Psoas muscle (tissue), 8 donors: ENCODE measurements at regions of chr15 and their contacts with region 1.

Region 1: DNA sequence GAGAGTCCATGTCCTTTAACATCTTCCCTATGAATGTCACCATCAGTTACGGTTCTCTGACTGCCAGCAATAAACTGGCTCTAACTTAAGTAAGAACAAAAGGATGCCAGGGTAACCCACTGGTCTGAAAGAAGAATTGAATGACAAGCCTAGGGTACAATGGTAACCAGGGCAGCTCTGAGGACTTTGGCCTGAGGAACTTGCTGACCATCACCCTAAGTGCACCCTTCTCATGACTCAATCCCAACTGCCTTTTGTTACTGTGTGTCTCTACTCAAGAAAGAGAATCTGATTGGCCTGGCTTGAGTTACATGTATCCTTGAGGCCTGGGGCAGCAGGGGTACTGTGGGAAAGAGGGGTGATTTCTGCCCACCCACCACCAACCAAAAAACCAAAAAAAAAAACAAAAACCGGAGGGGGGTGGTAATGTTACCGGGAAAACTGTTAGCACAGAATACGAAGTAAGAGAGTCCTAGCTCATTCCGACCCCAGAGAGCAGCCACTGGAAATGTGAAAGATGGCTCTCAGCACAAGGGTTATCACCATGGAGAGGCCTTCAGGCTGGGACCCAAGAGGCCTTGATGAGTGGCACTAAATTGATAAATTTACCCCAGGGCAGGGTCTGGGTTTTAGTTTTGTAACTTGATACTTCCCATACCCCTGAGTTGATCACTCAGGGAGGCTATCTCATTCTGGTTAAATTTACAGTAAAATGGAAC is 9.3 kb upstream of the SLC28A1 start:
- DNase-seq: no peak
- ATAC-seq: peak in 3 of 4 donors; percentile 17 to 30 (median 26)
- H3K4me3 ChIP-seq: no peak overlapping the region
- H3K27ac ChIP-seq: no peak overlapping the region
- H3K4me1 ChIP-seq: peaks cover 24% of the 10 kb centered on the region
- H3K27me3 ChIP-seq: no peaks in the 10 kb centered on the region
- CTCF ChIP-seq: no peak

Region 2: DNA sequence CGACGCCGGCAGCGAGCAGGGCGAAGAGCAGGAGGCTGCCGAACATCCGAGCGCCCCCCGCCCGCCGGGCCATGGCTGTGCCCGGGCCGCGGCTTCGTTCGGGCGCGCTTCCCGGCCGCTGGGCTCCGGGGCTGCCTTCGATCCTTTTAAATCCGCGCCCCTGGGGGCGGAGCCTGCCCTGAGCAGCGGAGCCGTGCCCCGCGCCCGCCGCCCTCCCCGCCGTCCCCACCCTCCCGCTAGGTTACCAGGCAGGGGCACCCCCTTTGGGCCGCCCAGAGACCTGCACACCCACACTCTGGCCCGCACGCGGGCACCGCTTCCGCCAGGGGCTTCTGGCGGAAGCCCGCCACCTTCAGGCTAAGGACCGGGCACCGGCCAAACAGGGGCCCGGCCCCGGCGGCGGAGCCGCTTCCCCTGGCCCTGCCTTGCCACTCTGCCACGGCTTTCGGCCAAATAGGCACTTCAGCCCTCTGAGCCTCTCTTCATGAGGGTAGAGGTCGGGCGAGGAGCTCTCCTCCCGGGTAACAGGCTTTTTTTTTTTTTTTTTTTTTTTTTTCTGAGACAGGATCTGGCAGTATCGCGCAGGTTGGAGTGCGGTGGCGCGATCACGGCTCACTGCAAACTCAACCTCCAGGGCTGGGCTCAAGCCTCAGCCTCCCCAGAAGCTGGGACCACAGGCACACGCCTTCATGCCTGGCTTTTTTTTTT is 216.9 kb before region 1 on chr15 and contains the start of gene NMB:
- intact Hi-C with region 1: loop called in 1 of 2 experiments (anchors 5 kb)
- DNase-seq: peak; percentile 81 to 90
- ATAC-seq: peak; percentile 61 to 80 (median 74)
- H3K4me3 ChIP-seq: peak within 1 kb of the TSS; percentile 73
- H3K27ac ChIP-seq: peak within 1 kb of the TSS; percentile 80
- H3K4me1 ChIP-seq: peaks cover 18% of the 10 kb centered on the region
- H3K27me3 ChIP-seq: no peaks in the 10 kb centered on the region
- CTCF ChIP-seq: peak; percentile 44
- total RNA-seq, gene NMB: 1.0 to 2.1 (median 1.2) TPM

Region 3: DNA sequence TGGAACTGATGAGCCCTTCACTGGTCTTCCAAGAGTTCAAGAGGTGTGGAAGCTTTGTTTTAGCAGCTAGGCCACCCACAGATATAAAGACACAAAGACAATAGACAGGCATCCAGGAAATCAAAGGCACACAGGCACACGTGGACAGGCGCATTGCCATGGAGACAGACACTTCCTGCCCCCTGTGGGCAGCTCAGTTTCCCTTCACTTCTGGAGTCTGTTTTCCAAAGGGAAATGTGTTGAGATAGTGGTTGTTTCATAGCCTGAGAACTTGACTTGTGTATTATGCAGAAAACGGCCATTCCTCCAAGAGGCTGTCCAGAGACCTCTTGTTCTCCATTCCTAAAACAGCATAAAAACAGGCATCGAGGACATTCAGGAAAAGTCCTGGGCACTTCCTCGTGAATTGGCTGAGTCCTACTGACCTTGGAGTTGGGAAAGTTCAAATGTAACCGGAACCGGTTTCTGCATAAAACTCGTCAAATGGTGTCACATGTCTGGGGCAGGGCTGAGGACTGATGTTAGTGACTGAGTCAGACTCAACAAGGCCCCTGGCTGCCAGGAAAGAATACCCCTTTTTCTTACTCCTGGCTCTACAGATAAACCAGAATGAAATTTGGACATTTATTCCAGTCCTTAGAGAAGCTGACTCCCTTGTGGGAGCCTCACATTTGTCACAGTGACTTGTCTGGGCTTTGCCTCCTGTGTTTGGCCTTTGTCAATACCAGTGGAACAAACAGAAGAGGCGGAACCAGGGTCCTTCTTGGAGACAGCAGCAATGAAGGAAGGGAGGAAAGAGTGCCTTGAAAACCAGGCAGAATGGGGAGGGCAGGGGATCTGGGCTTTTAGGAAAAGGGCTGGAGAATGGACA is 56.6 kb before region 1 on chr15:
- intact Hi-C with region 1: loop called in 1 of 2 experiments (anchors 2 kb)
- DNase-seq: peak; percentile 46 to 73
- ATAC-seq: peak; percentile 38 to 75 (median 53)
- H3K4me3 ChIP-seq: peak overlapping the region; percentile 90
- H3K27ac ChIP-seq: peak overlapping the region; percentile 99
- H3K4me1 ChIP-seq: peaks cover 55% of the 10 kb centered on the region
- H3K27me3 ChIP-seq: no peaks in the 10 kb centered on the region
- CTCF ChIP-seq: no peak

Region 4: GRCh38 chr15:84833447-84834228 is 41.5 kb before region 1 on chr15:
- intact Hi-C with region 1: no loop called
- DNase-seq: no peak
- ATAC-seq: peak; percentile 38 to 58 (median 48)
- H3K4me3 ChIP-seq: peak overlapping the region; percentile 5
- H3K27ac ChIP-seq: peak overlapping the region; percentile 99
- H3K4me1 ChIP-seq: peaks cover 98% of the 10 kb centered on the region
- H3K27me3 ChIP-seq: no peaks in the 10 kb centered on the region
- CTCF ChIP-seq: no peak

Region 5: GRCh38 chr15:85000189-85000864 is 125.2 kb after region 1 on chr15:
- intact Hi-C with region 1: no loop called
- DNase-seq: no peak
- ATAC-seq: no peak
- H3K4me3 ChIP-seq: no peak overlapping the region
- H3K27ac ChIP-seq: no peak overlapping the region
- H3K4me1 ChIP-seq: peaks cover 49% of the 10 kb centered on the region
- H3K27me3 ChIP-seq: no peaks in the 10 kb centered on the region
- CTCF ChIP-seq: no peak

Region 6: GRCh38 chr15:85485956-85486567 is 610.9 kb after region 1 on chr15:
- intact Hi-C with region 1: no loop called
- DNase-seq: no peak
- ATAC-seq: peak; percentile 80 to 91 (median 88)
- H3K4me3 ChIP-seq: no peak overlapping the region
- H3K27ac ChIP-seq: no peak overlapping the region
- H3K4me1 ChIP-seq: peaks cover 6% of the 10 kb centered on the region
- H3K27me3 ChIP-seq: no peaks in the 10 kb centered on the region
- CTCF ChIP-seq: peak; percentile 66